Caco-2 (cell line): ENCODE measurements at regions of chr4 and their contacts with region 1.

Region 1: DNA sequence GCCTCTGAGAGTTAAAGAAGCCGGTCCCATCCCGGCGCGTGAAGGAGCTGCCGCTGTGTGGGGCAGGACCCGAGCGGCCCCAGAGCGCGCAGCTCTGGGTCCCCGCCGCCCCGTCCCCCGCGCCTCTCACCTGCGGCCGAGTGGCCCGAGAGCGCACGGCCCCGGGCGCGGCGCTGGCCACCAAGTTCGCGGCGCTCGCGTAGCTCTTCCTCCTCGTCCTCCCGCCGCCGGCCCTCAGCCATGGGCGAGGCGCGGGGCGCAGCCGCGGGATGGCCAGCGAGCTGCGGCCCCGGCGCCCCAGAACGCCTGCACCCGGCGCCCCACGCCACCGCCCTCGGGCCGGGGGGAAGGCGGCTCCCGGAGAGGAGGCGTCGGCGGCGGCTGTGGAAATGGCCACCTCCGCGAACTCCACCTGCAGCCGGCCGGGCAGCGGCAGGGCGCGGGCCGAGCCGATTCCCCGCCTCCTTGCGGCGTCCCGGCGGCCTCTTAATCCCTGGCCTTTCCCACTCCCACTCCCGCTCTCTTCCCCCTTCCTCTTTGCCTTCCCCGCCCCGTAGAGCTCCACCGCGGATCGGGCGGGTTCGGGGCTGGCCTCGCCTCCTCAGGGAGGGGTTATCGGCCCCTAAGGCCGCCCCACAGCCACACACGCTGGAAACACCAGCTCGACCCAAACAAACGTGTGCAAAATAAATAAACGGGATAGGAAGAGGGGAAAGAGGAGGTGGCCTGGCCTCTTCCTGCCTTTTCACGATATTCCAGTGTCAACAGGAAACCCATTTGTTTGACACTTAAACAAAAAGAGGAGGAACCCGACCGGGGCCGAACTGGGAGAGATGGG is at the start of gene SH3D19:
- DNase-seq: peak; percentile 88 to 90
- H3K4me3 ChIP-seq: peak within 1 kb of the TSS; percentile 59
- H3K4me3 Mint-ChIP-seq: peak within 1 kb of the TSS; percentile 86
- H3K27ac Mint-ChIP-seq: peak within 1 kb of the TSS; percentile 89
- H3K4me1 ChIP-seq: peaks cover 31% of the 10 kb centered on the region
- H3K4me1 Mint-ChIP-seq: peaks cover 34% of the 10 kb centered on the region
- H3K27me3 ChIP-seq: no peaks in the 10 kb centered on the region
- H3K27me3 Mint-ChIP-seq: no peaks in the 10 kb centered on the region
- CTCF ChIP-seq: no peak
- total RNA-seq, gene SH3D19: 57.2 and 57.8 TPM in 2 replicates

Region 2: GRCh38 chr4:151276787-151277562 is 48.4 kb before region 1 on chr4 and contains the start of gene PRSS48:
- CTCF ChIA-PET with region 1: interaction called, 4 read pairs
- POLR2A ChIA-PET with region 1: interaction called, 5 read pairs
- intact Hi-C with region 1: loop called (anchors 2 kb)
- DNase-seq: peak; percentile 74 to 85
- H3K4me3 ChIP-seq: no peak within 1 kb of the TSS
- H3K4me3 Mint-ChIP-seq: no peak within 1 kb of the TSS
- H3K27ac Mint-ChIP-seq: peak within 1 kb of the TSS; percentile 49
- H3K4me1 ChIP-seq: peaks cover 9% of the 10 kb centered on the region
- H3K4me1 Mint-ChIP-seq: peaks cover 33% of the 10 kb centered on the region
- H3K27me3 ChIP-seq: no peaks in the 10 kb centered on the region
- H3K27me3 Mint-ChIP-seq: no peaks in the 10 kb centered on the region
- CTCF ChIP-seq: peak; percentile 75 to 80
- total RNA-seq, gene PRSS48: not detected in 2 replicates

Region 3: GRCh38 chr4:151304755-151305154 is 20.6 kb before region 1 on chr4:
- CTCF ChIA-PET with region 1: no interaction called
- POLR2A ChIA-PET with region 1: interaction called, 11 read pairs
- intact Hi-C with region 1: no loop called
- DNase-seq: no peak
- H3K4me3 ChIP-seq: no peak overlapping the region
- H3K4me3 Mint-ChIP-seq: no peak overlapping the region
- H3K27ac Mint-ChIP-seq: no peak overlapping the region
- H3K4me1 ChIP-seq: 0 out of 2 replicates have a peak, but pooled peaks cover 8% of the 10 kb centered on the region
- H3K4me1 Mint-ChIP-seq: no peaks in the 10 kb centered on the region
- H3K27me3 ChIP-seq: no peaks in the 10 kb centered on the region
- H3K27me3 Mint-ChIP-seq: no peaks in the 10 kb centered on the region
- CTCF ChIP-seq: no peak

Region 4: DNA sequence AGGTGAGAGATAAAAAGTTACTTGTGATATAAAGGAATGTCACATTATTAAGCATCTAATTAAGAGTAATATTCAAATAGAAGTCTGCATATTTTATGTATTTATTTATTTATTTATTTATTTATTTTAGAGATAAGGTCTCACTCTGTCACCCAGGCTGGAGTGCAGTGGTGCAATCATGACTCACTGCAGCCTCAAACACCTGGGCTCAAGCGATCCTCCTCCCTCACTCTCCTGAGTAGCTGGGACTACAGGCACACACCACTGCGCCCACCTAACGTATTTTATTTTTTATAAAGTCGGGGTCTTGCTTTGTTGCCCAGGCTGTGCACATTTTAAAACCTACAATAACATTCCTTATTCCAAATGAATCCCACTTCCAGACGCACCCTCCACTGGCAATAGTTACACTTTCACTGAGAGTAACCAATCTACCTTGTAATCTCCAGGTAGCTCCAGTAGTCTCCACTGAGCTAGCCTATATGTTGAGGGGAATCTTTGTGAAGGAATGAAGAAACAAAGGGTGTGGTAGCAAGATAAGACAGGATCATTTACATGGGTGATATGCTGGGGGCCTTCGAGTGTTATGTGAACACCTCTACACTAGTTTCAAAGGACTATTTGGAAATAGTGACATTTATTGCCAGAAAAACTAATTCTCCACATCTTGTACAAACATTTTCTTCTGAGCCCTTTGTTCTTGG is 11.9 kb before region 1 on chr4:
- CTCF ChIA-PET with region 1: no interaction called
- POLR2A ChIA-PET with region 1: interaction called, 20 read pairs
- intact Hi-C with region 1: loop called (anchors 1 kb)
- DNase-seq: peak; percentile 57 to 76
- H3K4me3 ChIP-seq: no peak overlapping the region
- H3K4me3 Mint-ChIP-seq: peak overlapping the region; percentile 66
- H3K27ac Mint-ChIP-seq: peak overlapping the region; percentile 87
- H3K4me1 ChIP-seq: peaks cover 45% of the 10 kb centered on the region
- H3K4me1 Mint-ChIP-seq: peaks cover 46% of the 10 kb centered on the region
- H3K27me3 ChIP-seq: no peaks in the 10 kb centered on the region
- H3K27me3 Mint-ChIP-seq: no peaks in the 10 kb centered on the region
- CTCF ChIP-seq: no peak

Region 5: GRCh38 chr4:151340751-151341385 is 15.5 kb after region 1 on chr4:
- CTCF ChIA-PET with region 1: interaction called, 3 read pairs
- POLR2A ChIA-PET with region 1: interaction called, 8 read pairs
- intact Hi-C with region 1: loop called (anchors 1 kb)
- DNase-seq: peak; percentile 62 to 70
- H3K4me3 ChIP-seq: no peak overlapping the region
- H3K4me3 Mint-ChIP-seq: peak overlapping the region; percentile 39
- H3K27ac Mint-ChIP-seq: peak overlapping the region; percentile 88
- H3K4me1 ChIP-seq: peaks cover 21% of the 10 kb centered on the region
- H3K4me1 Mint-ChIP-seq: peaks cover 24% of the 10 kb centered on the region
- H3K27me3 ChIP-seq: no peaks in the 10 kb centered on the region
- H3K27me3 Mint-ChIP-seq: no peaks in the 10 kb centered on the region
- CTCF ChIP-seq: no peak

Region 6: GRCh38 chr4:151408630-151409469 is 83.5 kb after region 1 on chr4 and contains the start of gene FHIP1A:
- CTCF ChIA-PET with region 1: interaction called, 3 read pairs
- POLR2A ChIA-PET with region 1: interaction called, 11 read pairs
- intact Hi-C with region 1: loop called (anchors 1 kb)
- DNase-seq: peak; percentile 95 to 96
- H3K4me3 ChIP-seq: peak within 1 kb of the TSS; percentile 80
- H3K4me3 Mint-ChIP-seq: peak within 1 kb of the TSS; percentile 86
- H3K27ac Mint-ChIP-seq: peak within 1 kb of the TSS; percentile 85
- H3K4me1 ChIP-seq: peaks cover 11% of the 10 kb centered on the region; the same call in 1 of the 2 replicates
- H3K4me1 Mint-ChIP-seq: no peaks in the 10 kb centered on the region
- H3K27me3 ChIP-seq: no peaks in the 10 kb centered on the region
- H3K27me3 Mint-ChIP-seq: no peaks in the 10 kb centered on the region
- CTCF ChIP-seq: peak in 1 of 2 experiments; percentile 12
- total RNA-seq, gene FHIP1A: 18.9 and 22.3 TPM in 2 replicates

Region 7: GRCh38 chr4:151644622-151645021 is 319.3 kb after region 1 on chr4:
- CTCF ChIA-PET with region 1: no interaction called
- POLR2A ChIA-PET with region 1: no interaction called
- intact Hi-C with region 1: no loop called
- DNase-seq: peak; percentile 48 to 49
- H3K4me3 ChIP-seq: no peak overlapping the region
- H3K4me3 Mint-ChIP-seq: no peak overlapping the region
- H3K27ac Mint-ChIP-seq: no peak overlapping the region
- H3K4me1 ChIP-seq: no peaks in the 10 kb centered on the region
- H3K4me1 Mint-ChIP-seq: no peaks in the 10 kb centered on the region
- H3K27me3 ChIP-seq: no peaks in the 10 kb centered on the region
- H3K27me3 Mint-ChIP-seq: no peaks in the 10 kb centered on the region
- CTCF ChIP-seq: peak; percentile 33 to 55